Natural killer cell (primary cell): ENCODE measurements at regions of chr6 and their contacts with region 1.

Region 1: GRCh38 chr6:20291764-20292580 is 79.7 kb upstream of the MBOAT1 start:
- DNase-seq: peak; percentile 59 to 89
- ATAC-seq: peak; percentile 82 to 98 (median 97)
- H3K4me3 ChIP-seq: no peak overlapping the region
- H3K4me3 Mint-ChIP-seq: no peak overlapping the region
- H3K27ac ChIP-seq: no peak overlapping the region
- H3K27ac Mint-ChIP-seq: no peak overlapping the region
- H3K4me1 ChIP-seq: no peaks in the 10 kb centered on the region
- H3K4me1 Mint-ChIP-seq: peaks cover 0 to 6% of the 10 kb centered on the region in 2 donors
- H3K27me3 ChIP-seq: no peaks in the 10 kb centered on the region
- H3K27me3 Mint-ChIP-seq: peaks cover 0 to under 1% of the 10 kb centered on the region in 2 donors
- CTCF ChIP-seq: peak; percentile 97

Region 2: GRCh38 chr6:20377623-20378265 is 85.8 kb after region 1 on chr6:
- intact Hi-C with region 1: no loop called
- DNase-seq: peak in 1 of 2 donors; percentile 13
- ATAC-seq: peak; percentile 78 to 97 (median 78)
- H3K4me3 ChIP-seq: no peak overlapping the region
- H3K4me3 Mint-ChIP-seq: peak overlapping the region; percentile 57
- H3K27ac ChIP-seq: peak overlapping the region; percentile 21
- H3K27ac Mint-ChIP-seq: peak overlapping the region; percentile 51 to 88
- H3K4me1 ChIP-seq: peaks cover 4% of the 10 kb centered on the region
- H3K4me1 Mint-ChIP-seq: peaks cover 17 to 19% of the 10 kb centered on the region in 2 donors
- H3K27me3 ChIP-seq: no peaks in the 10 kb centered on the region
- H3K27me3 Mint-ChIP-seq: no peaks in the 10 kb centered on the region
- CTCF ChIP-seq: no peak

Region 3: DNA sequence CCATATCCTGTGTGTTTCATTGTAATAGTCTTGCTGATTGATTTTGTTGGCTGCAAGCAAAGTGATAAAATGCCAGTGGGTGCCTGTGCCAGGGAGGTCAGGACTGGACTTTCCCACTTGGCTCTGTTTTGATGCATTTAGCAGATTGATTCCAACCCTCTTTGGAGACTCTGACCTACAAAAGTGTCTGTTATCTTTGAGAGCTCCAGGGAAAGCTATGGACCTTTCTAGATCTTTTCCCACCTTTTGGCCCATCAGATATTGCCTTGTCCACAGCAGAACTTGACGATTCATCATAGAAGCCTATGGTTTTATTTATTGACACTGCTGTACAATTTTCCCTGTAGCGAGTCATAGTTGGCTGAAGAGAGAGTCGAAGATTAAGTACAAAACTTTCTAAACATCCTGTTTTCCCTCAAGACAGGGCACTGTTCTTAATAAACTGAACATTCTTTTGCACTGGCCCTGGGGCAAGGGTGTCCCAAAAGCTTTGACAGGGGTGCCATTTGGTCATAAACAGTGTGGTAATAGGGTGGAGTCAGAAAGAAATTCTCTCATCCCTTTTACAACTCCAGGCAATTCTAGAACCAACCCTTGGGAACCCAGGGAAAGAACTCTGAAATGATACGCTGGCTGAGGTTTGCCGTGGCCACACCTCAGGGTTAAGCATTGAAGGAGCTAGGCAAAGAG is 163.4 kb after region 1 on chr6:
- intact Hi-C with region 1: loop called (anchors 1 kb)
- DNase-seq: no peak
- ATAC-seq: no peak
- H3K4me3 ChIP-seq: no peak overlapping the region
- H3K4me3 Mint-ChIP-seq: no peak overlapping the region
- H3K27ac ChIP-seq: no peak overlapping the region
- H3K27ac Mint-ChIP-seq: peak overlapping the region in 1 of 2 donors; percentile 9
- H3K4me1 ChIP-seq: peaks cover 5% of the 10 kb centered on the region
- H3K4me1 Mint-ChIP-seq: peaks cover 28 to 55% of the 10 kb centered on the region in 2 donors
- H3K27me3 ChIP-seq: no peaks in the 10 kb centered on the region
- H3K27me3 Mint-ChIP-seq: no peaks in the 10 kb centered on the region
- CTCF ChIP-seq: no peak